WTC11 (cell line): ENCODE measurements at regions of chr9 and their contacts with region 1.

Region 1: DNA sequence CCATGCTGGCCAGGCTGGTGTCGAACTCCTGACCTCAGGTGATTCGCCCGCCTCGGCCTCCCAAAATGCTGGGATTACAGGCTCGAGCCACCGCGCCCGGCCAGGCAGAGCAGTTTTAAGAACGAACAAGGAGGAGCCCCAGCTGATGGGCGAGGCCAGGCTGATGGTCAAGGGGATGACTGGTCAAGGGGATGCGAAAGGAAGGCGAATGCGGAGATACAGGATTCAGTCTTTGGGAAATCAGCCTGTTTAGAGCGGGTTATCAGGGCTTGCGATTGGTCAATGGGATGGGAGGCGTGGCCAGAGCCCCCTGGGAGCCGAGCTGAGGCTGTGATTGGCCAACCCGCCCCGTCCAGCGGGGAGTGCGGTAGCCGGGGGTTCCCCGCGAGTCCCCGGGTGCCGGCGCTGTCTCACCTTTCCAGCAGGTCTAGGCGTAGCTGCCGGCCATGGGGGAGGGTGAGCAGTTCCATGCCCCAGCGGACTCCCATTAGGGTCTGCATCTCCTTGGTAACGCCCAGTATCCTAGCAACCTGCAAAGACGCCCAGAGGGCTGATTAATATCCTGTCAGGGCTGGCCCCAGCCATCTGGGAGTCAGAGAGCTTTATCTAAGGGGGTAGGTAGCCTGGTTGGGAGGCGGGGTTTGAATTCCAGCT is 7.5 kb upstream of the TOR2A start:
- DNase-seq: peak; percentile 94
- ATAC-seq: peak; percentile 85
- H3K4me3 Mint-ChIP-seq: peak overlapping the region; percentile 90
- H3K27ac Mint-ChIP-seq: peak overlapping the region; percentile 97
- H3K4me1 Mint-ChIP-seq: peaks cover 6% of the 10 kb centered on the region
- H3K27me3 Mint-ChIP-seq: peaks cover 15% of the 10 kb centered on the region
- CTCF ChIP-seq: no peak

Region 2: GRCh38 chr9:127754099-127755050 is 11.8 kb after region 1 on chr9:
- CTCF ChIA-PET with region 1: interaction called, 10 read pairs
- POLR2A ChIA-PET with region 1: interaction called, 3 read pairs
- DNase-seq: peak; percentile 80
- ATAC-seq: peak; percentile 84
- H3K4me3 Mint-ChIP-seq: peak overlapping the region; percentile 68
- H3K27ac Mint-ChIP-seq: no peak overlapping the region
- H3K4me1 Mint-ChIP-seq: peaks cover 4% of the 10 kb centered on the region; the same call in 1 of the 2 replicates
- H3K27me3 Mint-ChIP-seq: peaks cover 58% of the 10 kb centered on the region
- CTCF ChIP-seq: no peak

Region 3: GRCh38 chr9:127763918-127764384 is 21.4 kb after region 1 on chr9:
- CTCF ChIA-PET with region 1: interaction called, 10 read pairs
- POLR2A ChIA-PET with region 1: interaction called, 3 read pairs
- DNase-seq: peak; percentile 78
- ATAC-seq: peak; percentile 78
- H3K4me3 Mint-ChIP-seq: no peak overlapping the region
- H3K27ac Mint-ChIP-seq: peak overlapping the region; percentile 8; the same call in 1 of the 2 replicates
- H3K4me1 Mint-ChIP-seq: peaks cover 44% of the 10 kb centered on the region
- H3K27me3 Mint-ChIP-seq: peaks cover 4% of the 10 kb centered on the region; the same call in 1 of the 2 replicates
- CTCF ChIP-seq: 0 out of 2 replicates have a peak, but pooled peaks have one; percentile 37

Region 4: GRCh38 chr9:127770905-127771569 is 28.5 kb after region 1 on chr9:
- CTCF ChIA-PET with region 1: interaction called, 11 read pairs
- POLR2A ChIA-PET with region 1: interaction called, 12 read pairs
- DNase-seq: peak; percentile 100
- ATAC-seq: peak; percentile 97
- H3K4me3 Mint-ChIP-seq: peak overlapping the region; percentile 84
- H3K27ac Mint-ChIP-seq: no peak overlapping the region
- H3K4me1 Mint-ChIP-seq: peaks cover 32% of the 10 kb centered on the region
- H3K27me3 Mint-ChIP-seq: peaks cover 11% of the 10 kb centered on the region
- CTCF ChIP-seq: no peak

Region 5: DNA sequence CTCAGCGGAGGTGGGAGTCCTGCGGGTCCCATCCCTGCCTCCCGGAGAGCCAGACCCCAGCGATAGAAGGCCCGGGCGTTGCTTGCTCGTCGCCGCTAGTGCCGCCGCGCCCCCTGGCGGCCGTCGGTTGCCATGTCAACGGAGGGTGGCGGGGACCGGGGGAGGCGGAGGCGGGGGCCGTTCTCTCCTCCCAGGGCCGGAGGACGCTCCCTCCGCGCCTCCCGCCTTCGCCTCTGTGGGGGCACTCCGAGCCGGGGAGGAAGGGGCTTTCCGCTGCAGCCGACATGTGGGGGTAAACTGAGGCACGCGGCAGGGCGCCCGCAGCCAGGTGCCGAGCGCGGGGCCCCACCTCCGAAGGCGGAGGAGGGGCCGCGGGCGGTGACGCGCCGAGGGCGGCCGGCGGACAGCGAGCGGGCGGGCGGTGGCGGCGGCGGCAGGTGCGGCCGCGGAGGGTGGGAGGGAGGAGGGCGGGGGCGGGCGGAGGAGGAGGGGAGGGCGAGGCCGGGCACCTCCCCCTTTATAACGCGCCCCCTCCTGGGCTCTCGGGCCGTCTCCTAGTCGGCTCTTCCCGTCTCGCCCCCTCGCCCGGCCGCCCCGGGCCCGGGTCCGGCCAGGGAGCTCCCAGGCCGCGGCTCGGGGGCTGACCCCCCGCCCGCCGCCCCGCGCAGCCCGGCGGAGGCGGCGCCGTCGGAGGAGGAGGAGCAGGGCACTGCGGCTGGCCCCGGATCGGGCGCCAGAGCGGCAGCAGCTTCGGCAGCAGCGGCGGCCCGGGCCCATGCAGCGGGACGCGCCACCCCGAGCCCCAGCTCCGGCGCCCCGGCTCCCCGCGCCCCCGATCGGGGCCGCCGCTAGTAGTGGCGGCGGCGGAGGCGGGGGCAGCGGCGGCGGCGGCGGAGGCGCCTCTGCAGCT is 42.7 kb after region 1 on chr9:
- CTCF ChIA-PET with region 1: interaction called, 14 read pairs
- POLR2A ChIA-PET with region 1: interaction called, 4 read pairs
- DNase-seq: peak; percentile 90
- ATAC-seq: peak; percentile 34
- H3K4me3 Mint-ChIP-seq: peak overlapping the region; percentile 97
- H3K27ac Mint-ChIP-seq: no peak overlapping the region
- H3K4me1 Mint-ChIP-seq: peaks cover 20% of the 10 kb centered on the region
- H3K27me3 Mint-ChIP-seq: no peaks in the 10 kb centered on the region
- CTCF ChIP-seq: peak; percentile 95

Region 6: GRCh38 chr9:127796899-127797370 is 54.4 kb after region 1 on chr9:
- CTCF ChIA-PET with region 1: interaction called, 7 read pairs
- POLR2A ChIA-PET with region 1: interaction called, 16 read pairs
- DNase-seq: no peak
- ATAC-seq: no peak
- H3K4me3 Mint-ChIP-seq: no peak overlapping the region
- H3K27ac Mint-ChIP-seq: no peak overlapping the region
- H3K4me1 Mint-ChIP-seq: peaks cover 8% of the 10 kb centered on the region
- H3K27me3 Mint-ChIP-seq: no peaks in the 10 kb centered on the region
- CTCF ChIP-seq: no peak

Region 7: DNA sequence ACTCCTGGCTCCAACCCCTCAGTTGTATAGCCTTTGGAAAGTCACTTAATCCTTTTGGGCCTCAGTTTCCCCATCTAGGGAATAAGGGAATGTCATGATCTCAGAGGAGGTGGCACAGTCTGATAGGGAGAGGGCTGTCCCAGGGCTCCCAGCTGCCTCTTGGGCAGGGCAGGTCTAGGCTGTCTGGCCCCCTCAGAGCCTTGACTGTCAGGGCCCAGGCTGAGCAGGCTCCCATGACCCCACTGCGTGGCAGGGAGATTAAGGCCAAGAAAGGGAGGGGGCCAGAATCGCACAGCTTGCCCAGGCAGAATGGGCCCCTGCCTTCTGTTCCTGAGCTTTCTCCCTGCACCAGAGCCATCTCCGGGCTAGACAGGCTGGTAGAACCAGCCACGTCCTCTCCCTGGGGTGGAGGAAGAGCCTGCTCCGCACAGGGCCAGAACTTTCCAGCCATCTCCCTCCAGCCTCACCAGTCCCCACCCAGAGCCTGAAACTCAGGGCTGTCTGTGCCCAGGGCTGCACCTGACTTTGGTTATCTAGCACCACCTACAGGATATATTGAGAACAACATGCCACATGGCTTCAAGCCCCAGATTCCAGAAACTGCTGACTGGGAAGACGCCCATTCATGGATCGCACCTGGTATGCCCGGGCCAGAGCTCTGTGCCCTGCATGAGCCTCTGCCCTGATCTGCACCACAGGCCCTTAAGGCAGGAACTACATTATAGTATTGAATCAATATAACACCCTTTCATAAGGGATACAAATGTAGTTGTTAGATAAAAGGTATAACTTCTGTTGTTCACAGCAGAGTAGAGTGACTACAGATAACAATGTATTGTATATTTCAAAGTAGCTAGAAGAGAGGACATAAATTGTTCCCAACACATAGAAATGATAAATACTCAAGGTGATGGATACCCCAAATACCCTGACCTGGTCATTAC is 292.5 kb after region 1 on chr9:
- CTCF ChIA-PET with region 1: no interaction called
- POLR2A ChIA-PET with region 1: no interaction called
- DNase-seq: peak; percentile 80
- ATAC-seq: peak; percentile 98
- H3K4me3 Mint-ChIP-seq: no peak overlapping the region
- H3K27ac Mint-ChIP-seq: peak overlapping the region; percentile 6
- H3K4me1 Mint-ChIP-seq: 0 out of 2 replicates have a peak, but pooled peaks cover 2% of the 10 kb centered on the region
- H3K27me3 Mint-ChIP-seq: no peaks in the 10 kb centered on the region
- CTCF ChIP-seq: peak; percentile 93